Activated naive CD8-positive, alpha-beta T cell treated with anti-CD3 and anti-CD28 coated beads, Interleukin-2, amount 10 ng/mL, durations not matched to agents 7 days and 5 days (primary cell): ENCODE measurements at regions of chr7 and their contacts with region 1.

Region 1: DNA sequence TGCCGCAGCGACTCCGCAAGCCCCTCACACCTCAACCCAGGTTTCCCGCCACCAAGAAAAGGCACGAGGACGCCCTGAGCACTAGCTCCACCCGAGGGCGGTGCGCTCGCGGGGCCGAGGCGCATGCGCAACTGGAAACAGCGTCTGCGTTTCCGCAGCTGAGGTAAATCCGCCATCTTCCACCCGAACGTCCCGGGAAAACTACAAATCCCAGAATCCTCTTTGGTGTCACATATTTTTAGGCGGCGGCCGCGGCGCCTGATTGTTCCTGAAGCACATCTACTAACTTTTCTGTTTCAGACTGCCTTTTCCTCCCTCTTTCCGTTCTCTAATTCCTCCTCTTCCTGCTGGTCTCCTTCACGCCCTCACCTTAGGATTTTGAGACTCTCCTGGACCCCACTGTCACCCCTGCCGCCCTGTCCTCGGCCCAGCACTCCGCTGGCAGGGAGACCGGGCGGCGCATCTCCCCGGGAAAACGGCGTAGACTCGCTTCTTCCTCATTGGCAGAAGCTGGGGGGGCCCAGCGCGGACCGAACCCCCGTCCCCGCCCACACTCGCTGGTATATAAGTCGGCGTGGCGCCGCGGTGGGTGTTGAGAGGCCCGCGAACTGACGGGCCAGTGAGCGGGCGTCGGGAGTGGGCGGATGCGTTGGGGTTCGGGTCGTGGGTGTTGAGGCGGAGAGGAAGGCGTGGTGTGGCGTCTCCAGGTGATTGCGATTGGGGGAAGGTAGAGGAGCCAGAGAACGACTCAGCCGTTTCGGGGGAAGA is at the start of gene ZCWPW1:
- DNase-seq: peak; percentile 98
- ATAC-seq: peak; percentile 57
- H3K4me3 Mint-ChIP-seq: peak within 1 kb of the TSS; percentile 97
- H3K27ac Mint-ChIP-seq: peak within 1 kb of the TSS; percentile 99
- H3K4me1 Mint-ChIP-seq: peaks cover 28% of the 10 kb centered on the region
- H3K27me3 Mint-ChIP-seq: peaks cover 7% of the 10 kb centered on the region
- total RNA-seq, gene ZCWPW1: 6.2 to 6.5 TPM

Region 2: DNA sequence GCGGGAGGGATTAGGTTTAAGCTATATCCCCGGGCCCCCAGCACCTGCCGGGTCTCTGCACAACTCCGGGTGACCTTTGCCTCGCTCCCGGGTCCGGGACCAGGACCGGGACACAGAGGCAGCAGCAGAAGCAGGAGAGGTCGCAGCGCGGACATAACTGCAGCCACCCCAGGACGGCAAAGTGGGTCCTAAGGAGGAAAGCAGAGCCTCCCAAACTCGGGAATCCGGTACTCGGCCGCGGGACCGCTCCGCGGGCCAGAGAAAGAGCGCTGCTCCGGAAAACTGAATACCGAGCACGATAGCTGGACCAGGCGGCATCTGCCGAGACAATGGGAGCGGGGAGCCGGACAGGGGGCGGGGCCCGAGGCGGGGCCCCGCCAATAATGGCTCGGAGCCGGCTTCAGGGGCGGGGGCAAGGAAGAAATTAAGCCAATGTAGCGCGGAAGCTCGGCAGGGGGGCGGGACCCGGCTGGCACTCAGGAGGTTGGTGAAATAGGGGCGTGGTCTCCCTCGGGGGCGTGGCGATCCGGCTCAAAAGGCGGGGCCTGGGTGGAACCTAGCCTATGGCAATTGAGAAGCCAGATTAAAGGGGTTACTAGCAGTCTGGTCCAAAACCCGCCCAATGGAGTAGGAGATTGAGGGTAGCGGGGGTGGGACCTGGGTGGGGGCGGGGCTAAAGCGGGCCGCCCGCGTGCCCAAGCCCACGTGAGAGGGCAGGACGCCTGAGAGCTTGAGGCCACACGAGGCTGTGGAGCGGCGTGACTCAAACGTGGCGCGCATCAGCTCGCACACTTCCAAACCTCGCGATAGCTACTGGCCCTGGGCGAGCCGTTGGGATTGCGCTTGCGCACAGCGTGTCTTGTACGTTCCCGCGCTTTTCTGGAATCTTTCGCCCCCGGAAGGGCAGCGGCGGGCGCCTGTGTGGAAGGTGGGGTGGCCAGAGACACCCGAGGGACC is 251.1 kb before region 1 on chr7 and contains the starts of genes GPC2 and STAG3:
- POLR2A ChIA-PET with region 1: interaction called, 11 read pairs
- DNase-seq: peak; percentile 99
- ATAC-seq: peak; percentile 86
- H3K4me3 Mint-ChIP-seq: peak within 1 kb of the TSS; percentile 80
- H3K27ac Mint-ChIP-seq: peak within 1 kb of the TSS; percentile 64
- H3K4me1 Mint-ChIP-seq: peaks cover 48% of the 10 kb centered on the region
- H3K27me3 Mint-ChIP-seq: peaks cover 3% of the 10 kb centered on the region
- total RNA-seq, gene GPC2: 12.6 to 13.0 TPM
- total RNA-seq, gene STAG3: 31.1 to 38.8 TPM

Region 3: GRCh38 chr7:100374601-100375000 is 53.8 kb before region 1 on chr7:
- POLR2A ChIA-PET with region 1: interaction called, 11 read pairs
- DNase-seq: peak; percentile 46
- ATAC-seq: peak; percentile 71
- H3K4me3 Mint-ChIP-seq: peak overlapping the region; percentile 54
- H3K27ac Mint-ChIP-seq: peak overlapping the region; percentile 93
- H3K4me1 Mint-ChIP-seq: peaks cover 18% of the 10 kb centered on the region
- H3K27me3 Mint-ChIP-seq: no peaks in the 10 kb centered on the region

Region 4: DNA sequence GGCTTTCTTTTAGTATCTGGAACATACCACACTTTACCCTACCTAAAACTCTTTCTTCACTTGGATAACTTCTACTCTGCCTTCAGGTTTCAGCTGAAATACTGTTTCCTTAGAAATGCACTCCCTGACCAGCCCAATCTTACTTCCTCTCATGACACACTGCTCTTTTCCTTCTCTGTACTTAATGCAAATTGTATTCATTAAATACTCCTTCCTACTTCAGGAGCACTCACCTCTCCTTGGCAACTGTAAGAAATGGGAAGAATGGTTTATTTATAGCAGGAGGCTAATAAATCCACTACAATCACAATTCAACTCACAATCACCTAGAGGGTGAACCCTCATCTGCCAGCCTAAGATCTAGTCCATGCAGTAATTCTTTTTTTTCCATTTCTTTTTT is 15.0 kb before region 1 on chr7:
- POLR2A ChIA-PET with region 1: interaction called, 24 read pairs
- DNase-seq: no peak
- ATAC-seq: peak; percentile 50
- H3K4me3 Mint-ChIP-seq: peak overlapping the region; percentile 2
- H3K27ac Mint-ChIP-seq: peak overlapping the region; percentile 26
- H3K4me1 Mint-ChIP-seq: peaks cover 14% of the 10 kb centered on the region
- H3K27me3 Mint-ChIP-seq: peaks cover 2% of the 10 kb centered on the region

Region 5: DNA sequence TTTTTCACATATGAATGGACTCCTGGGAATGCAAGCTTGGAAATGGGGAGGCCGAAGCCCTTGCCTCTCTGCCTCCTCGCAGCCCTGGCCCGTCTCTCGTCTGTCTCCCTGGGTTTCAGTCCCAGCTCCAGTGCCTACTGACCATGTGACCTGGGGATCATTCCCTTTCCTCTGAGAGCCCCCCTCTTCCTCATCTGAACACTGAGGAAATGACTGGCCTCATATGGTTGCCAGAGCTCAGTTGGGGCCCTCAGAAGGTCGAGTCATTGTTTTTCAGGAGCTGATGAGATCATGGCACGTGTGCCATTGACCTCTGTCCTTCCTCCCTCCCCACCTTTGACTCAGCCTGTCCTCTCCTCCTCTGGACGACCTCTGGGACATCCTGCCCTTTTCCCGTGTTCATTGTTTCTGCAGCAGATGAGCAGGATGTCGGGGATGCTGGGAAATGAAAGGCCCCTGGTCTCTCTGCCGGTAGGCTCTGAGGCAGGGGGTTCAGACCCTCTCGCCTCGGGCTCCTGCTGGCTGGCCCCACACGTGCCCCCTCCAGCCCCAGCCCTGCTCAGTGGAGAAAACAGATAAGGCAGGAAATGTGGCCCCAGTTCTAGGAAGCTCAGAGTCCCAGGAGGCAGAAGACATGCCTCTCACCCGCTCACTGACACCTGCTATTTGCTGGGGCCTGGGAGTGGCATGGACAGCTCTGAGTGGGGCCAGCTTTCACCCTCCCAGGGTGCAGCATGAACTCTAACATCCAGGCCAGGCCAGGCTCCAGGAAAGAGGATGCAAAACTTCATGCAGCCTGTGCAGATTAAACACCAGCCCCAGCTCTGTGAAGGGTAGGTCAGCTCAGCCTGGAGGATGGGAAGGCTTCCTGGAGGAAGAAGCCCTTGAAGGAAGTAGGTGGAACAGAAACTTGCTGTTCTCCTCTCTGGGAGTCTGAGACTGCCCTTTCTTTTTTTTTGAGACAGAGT is 16.2 kb after region 1 on chr7:
- POLR2A ChIA-PET with region 1: interaction called, 63 read pairs
- DNase-seq: no peak
- ATAC-seq: peak; percentile 76
- H3K4me3 Mint-ChIP-seq: peak overlapping the region; percentile 38
- H3K27ac Mint-ChIP-seq: peak overlapping the region; percentile 83
- H3K4me1 Mint-ChIP-seq: peaks cover 20% of the 10 kb centered on the region
- H3K27me3 Mint-ChIP-seq: no peaks in the 10 kb centered on the region

Region 6: DNA sequence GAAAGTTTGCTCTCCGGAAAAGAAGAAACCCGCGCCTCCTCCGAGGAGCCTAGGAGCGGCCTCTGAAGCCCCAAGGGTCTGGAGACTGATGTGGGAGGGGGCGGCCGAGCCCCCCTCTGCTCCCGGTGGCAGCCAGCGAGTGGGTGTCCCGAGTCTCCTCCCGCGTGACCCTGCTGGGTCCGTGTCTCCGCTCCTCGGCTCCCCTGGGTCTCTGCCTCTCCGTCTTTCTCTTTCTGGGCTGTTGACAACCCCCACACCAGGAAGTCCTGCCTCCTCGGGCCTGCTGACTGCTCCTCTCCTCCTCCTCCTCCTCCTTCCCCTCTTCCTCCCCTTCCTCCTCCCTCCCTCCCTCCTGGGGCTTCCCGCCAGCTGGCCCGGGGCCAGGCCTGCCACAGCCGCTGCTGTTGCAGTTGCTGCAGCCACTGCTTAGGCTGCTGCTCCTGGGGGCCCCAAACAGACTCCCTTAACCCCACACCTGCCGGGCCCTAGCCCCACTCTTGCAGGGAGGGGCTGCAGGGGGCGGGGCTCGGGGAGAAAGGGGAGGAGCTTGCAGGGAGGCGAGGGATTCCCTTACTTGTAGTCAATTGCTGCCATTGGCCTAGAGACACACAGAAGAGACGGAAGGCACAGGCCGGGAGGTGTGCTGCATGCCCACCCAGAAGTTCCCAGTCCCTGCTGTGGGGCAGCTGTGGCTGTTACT is 50.7 kb after region 1 on chr7 and contains the start of gene TSC22D4:
- POLR2A ChIA-PET with region 1: interaction called, 10 read pairs
- DNase-seq: peak; percentile 93
- ATAC-seq: peak; percentile 78
- H3K4me3 Mint-ChIP-seq: peak within 1 kb of the TSS; percentile 100
- H3K27ac Mint-ChIP-seq: peak within 1 kb of the TSS; percentile 99
- H3K4me1 Mint-ChIP-seq: peaks cover 28% of the 10 kb centered on the region
- H3K27me3 Mint-ChIP-seq: peaks cover 3% of the 10 kb centered on the region
- total RNA-seq, gene TSC22D4: 157 to 159 TPM

Region 7: DNA sequence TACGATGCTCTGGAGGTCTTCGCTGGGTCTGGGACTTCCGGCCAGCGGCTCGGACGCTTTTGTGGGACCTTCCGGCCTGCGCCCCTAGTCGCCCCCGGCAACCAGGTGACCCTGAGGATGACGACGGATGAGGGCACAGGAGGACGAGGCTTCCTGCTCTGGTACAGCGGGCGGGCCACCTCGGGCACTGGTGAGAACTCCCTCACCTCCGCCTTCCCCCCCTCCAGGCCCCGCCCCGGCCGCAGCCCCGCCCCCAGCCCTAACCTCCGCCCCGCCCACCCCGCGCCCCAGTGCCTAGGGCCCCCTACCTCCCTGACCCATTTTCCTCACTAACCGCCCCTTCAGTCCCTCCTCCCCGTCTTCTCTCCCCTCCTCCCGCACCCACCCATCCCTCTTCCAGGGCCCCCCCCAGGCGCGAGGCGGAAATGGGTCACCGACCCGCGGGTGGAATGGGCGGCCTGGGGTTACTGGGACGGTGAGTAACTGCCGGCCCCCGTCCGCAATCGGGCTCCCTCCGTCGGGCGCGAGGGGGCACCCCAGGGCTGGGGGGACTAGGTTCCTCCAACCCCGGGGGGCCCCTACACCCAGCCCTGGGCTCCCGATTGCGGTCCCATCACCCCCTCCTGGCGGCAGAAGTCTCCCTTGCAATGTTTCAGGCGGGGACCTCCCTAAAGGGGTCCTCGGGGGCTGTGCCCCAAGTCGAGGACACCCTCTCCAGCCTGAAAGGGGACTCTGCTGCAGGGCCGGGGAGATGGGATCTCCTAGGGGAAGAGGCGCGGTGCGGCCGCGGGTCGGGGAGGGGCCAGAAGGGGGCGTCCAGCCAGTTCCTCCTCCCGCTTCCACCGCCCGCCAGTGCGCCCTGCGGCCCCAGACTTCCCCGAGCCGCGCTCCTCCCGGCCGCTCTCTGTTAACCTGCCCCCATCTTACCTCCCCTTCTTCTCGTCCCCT is 175.9 kb after region 1 on chr7:
- POLR2A ChIA-PET with region 1: no interaction called
- DNase-seq: peak; percentile 90
- ATAC-seq: peak; percentile 80
- H3K4me3 Mint-ChIP-seq: peak overlapping the region; percentile 89
- H3K27ac Mint-ChIP-seq: peak overlapping the region; percentile 93
- H3K4me1 Mint-ChIP-seq: peaks cover 26% of the 10 kb centered on the region
- H3K27me3 Mint-ChIP-seq: peaks cover 11% of the 10 kb centered on the region